CD4-positive, alpha-beta memory T cell (primary cell): ENCODE measurements at regions of chr3 and their contacts with region 1.

Region 1: GRCh38 chr3:195259475-195260279 is 11.3 kb downstream of the XXYLT1 start:
- DNase-seq: peak; percentile 87 to 94 (median 89)
- H3K4me3 ChIP-seq: peak overlapping the region in 1 of 2 donors; percentile 90
- H3K4me3 Mint-ChIP-seq: peak overlapping the region; percentile 62 to 79 (median 72)
- H3K27ac ChIP-seq: peak overlapping the region; percentile 76
- H3K27ac Mint-ChIP-seq: peak overlapping the region; percentile 75 to 93 (median 84)
- H3K4me1 ChIP-seq: peaks cover 27% of the 10 kb centered on the region
- H3K4me1 Mint-ChIP-seq: peaks cover 8 to 24% (median 14%) of the 10 kb centered on the region in 4 donors
- H3K27me3 ChIP-seq: no peaks in the 10 kb centered on the region
- H3K27me3 Mint-ChIP-seq: no peaks in the 10 kb centered on the region

Region 2: GRCh38 chr3:194333212-194333980 is 926.3 kb before region 1 on chr3:
- CTCF ChIA-PET with region 1: no interaction called
- POLR2A ChIA-PET with region 1: no interaction called
- intact Hi-C with region 1: loop called (anchors 5 kb)
- DNase-seq: peak; percentile 77 to 87 (median 84)
- H3K4me3 ChIP-seq: peak overlapping the region in 1 of 2 donors; percentile 38
- H3K4me3 Mint-ChIP-seq: peak overlapping the region; percentile 35 to 75 (median 64)
- H3K27ac ChIP-seq: no peak overlapping the region
- H3K27ac Mint-ChIP-seq: no peak overlapping the region
- H3K4me1 ChIP-seq: peaks cover 6% of the 10 kb centered on the region
- H3K4me1 Mint-ChIP-seq: peaks cover 0 to 4% (median 2%) of the 10 kb centered on the region in 4 donors
- H3K27me3 ChIP-seq: peaks cover 12% of the 10 kb centered on the region
- H3K27me3 Mint-ChIP-seq: peaks cover 14 to 30% of the 10 kb centered on the region in 2 donors

Region 3: GRCh38 chr3:194671900-194672808 is 587.5 kb before region 1 on chr3 and contains the start of gene LSG1:
- CTCF ChIA-PET with region 1: interaction called, 34 read pairs
- POLR2A ChIA-PET with region 1: interaction called, 17 read pairs
- intact Hi-C with region 1: loop called (anchors 1 kb)
- DNase-seq: peak; percentile 87 to 90 (median 89)
- H3K4me3 ChIP-seq: peak within 1 kb of the TSS; percentile 85 to 88
- H3K4me3 Mint-ChIP-seq: peak within 1 kb of the TSS; percentile 97 to 100 (median 99)
- H3K27ac ChIP-seq: peak within 1 kb of the TSS; percentile 95
- H3K27ac Mint-ChIP-seq: peak within 1 kb of the TSS; percentile 98 to 99 (median 99)
- H3K4me1 ChIP-seq: peaks cover 32% of the 10 kb centered on the region
- H3K4me1 Mint-ChIP-seq: peaks cover 26 to 52% (median 38%) of the 10 kb centered on the region in 4 donors
- H3K27me3 ChIP-seq: no peaks in the 10 kb centered on the region
- H3K27me3 Mint-ChIP-seq: peaks cover 0 to 4% of the 10 kb centered on the region in 2 donors
- total RNA-seq, gene LSG1: 48.4 to 49.5 TPM

Region 4: DNA sequence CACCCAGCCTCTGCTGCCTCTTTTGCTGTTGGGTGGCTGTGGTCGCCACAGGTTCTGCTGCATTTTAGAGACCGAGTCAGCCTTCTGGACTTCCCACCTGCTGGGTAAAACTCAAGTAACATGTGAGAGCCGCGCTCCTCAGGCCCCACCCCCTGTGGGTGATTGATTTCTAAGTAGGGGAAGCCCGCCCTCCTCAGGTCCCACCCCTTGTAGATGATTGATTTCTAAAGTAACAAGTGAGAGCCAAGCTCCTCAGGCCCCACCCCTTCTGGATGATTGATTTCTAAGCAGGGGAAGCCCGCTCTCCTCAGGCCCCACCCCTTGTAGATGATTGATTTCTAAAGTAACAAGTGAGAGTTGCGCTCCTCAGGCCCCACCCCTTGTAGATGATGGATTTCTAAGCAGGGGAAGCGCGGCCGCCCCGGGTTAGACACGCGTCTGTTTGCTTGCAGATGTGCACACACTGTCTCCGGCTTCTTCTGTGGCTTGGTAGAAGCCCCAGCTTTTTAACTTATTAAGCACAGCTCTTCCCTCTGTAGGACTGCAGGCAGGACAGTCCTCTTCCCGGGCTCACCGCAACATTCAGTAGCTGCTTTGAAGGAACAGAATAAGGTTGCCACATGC is 490.5 kb before region 1 on chr3:
- CTCF ChIA-PET with region 1: no interaction called
- POLR2A ChIA-PET with region 1: no interaction called
- intact Hi-C with region 1: loop called (anchors 1 kb)
- DNase-seq: peak; percentile 91 to 98 (median 94)
- H3K4me3 ChIP-seq: peak overlapping the region; percentile 33 to 54
- H3K4me3 Mint-ChIP-seq: peak overlapping the region; percentile 86 to 96 (median 87)
- H3K27ac ChIP-seq: peak overlapping the region; percentile 73
- H3K27ac Mint-ChIP-seq: peak overlapping the region; percentile 82 to 98 (median 95)
- H3K4me1 ChIP-seq: peaks cover 15% of the 10 kb centered on the region
- H3K4me1 Mint-ChIP-seq: peaks cover 5 to 30% (median 17%) of the 10 kb centered on the region in 4 donors
- H3K27me3 ChIP-seq: no peaks in the 10 kb centered on the region
- H3K27me3 Mint-ChIP-seq: peaks cover 8 to 11% of the 10 kb centered on the region in 2 donors

Region 5: DNA sequence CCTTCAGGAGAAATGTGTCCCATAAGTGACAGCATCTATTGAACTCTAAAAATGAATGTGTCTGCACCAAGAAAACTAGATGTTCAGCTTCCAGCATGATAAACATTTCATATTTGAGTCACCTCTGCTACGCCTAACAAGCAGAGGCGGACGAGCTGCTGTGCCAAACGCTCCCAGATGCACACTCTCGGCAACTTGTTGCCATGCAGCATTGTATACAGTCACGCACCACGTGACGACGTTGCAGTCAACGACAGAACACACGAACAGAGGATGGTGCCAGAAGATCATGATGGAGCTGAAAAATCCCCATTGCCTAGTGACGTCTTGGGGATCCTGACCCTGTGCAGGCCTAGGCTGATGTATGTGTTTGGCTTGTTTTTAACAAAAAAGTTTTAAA is 126.2 kb before region 1 on chr3:
- CTCF ChIA-PET with region 1: interaction called, 6 read pairs
- POLR2A ChIA-PET with region 1: interaction called, 4 read pairs
- intact Hi-C with region 1: loop called (anchors 1 kb)
- DNase-seq: peak; percentile 32 to 80 (median 50)
- H3K4me3 ChIP-seq: no peak overlapping the region
- H3K4me3 Mint-ChIP-seq: peak overlapping the region in 2 of 8 donors; percentile 27 to 48
- H3K27ac ChIP-seq: peak overlapping the region; percentile 37
- H3K27ac Mint-ChIP-seq: peak overlapping the region; percentile 49 to 94 (median 74)
- H3K4me1 ChIP-seq: peaks cover 36% of the 10 kb centered on the region
- H3K4me1 Mint-ChIP-seq: peaks cover 29 to 42% (median 32%) of the 10 kb centered on the region in 4 donors
- H3K27me3 ChIP-seq: no peaks in the 10 kb centered on the region
- H3K27me3 Mint-ChIP-seq: peaks cover 0 to 2% of the 10 kb centered on the region in 2 donors